ENCODE measurements at regions of chr2 and their contacts with region 1.

Region 1: DNA sequence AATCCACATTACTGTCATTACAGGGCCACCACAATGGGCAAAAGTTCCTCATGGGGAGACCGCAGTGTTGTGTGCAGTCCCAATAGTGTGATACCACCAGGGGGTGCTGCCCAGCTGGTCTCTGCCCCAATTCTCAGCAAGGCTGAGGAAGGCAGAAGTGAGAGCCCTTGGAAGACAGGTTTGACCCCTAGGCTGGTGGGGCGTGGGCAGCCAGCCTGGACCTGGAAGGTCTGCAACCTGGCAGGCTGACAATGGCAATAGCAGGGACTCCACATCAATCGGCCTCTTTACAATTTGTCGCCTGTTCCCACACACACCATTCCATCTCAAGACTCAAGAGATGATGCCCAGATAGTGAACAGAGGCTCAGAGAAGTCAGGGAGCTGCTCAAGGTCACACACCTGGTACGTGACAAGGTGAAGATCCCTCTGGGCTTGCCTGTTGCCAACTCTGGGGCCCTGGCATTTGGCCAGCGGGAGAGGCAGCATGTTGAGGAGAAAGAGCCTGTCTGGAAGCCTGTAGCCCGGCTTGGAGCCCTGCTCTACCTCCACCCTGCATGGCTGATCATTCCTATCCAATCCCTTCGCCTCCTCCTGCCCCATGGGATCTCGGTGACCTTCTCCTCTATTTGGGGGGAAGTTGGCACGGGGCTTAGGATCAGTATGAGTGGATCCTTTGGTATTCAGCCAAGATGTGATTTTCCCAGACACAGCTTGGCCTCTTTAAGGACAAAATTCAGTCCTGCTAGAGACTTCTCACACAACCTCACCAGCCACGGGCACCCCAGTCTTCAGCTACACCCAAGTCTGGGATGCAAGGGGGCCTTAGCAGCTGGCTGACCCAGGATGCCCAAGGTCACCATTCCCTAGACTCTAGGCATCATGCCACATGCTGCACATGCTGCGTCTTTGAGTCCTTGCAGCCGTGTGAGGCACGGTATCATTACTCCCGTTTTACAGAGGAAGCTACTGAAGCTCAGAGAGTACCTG is 2.9 kb upstream of the ATOH8 start:
- DNase-seq: peak in 3 of 4 donors; percentile 71 to 79 (median 73)
- ATAC-seq: peak; percentile 71
- H3K4me3 ChIP-seq: no peak overlapping the region
- H3K27ac ChIP-seq: no peak overlapping the region
- H3K4me1 ChIP-seq: peaks cover 7 to 71% of the 10 kb centered on the region in 2 donors
- H3K27me3 ChIP-seq: peaks cover 0 to 54% of the 10 kb centered on the region in 2 donors
- CTCF ChIP-seq: peak; percentile 81 to 87

Region 2: DNA sequence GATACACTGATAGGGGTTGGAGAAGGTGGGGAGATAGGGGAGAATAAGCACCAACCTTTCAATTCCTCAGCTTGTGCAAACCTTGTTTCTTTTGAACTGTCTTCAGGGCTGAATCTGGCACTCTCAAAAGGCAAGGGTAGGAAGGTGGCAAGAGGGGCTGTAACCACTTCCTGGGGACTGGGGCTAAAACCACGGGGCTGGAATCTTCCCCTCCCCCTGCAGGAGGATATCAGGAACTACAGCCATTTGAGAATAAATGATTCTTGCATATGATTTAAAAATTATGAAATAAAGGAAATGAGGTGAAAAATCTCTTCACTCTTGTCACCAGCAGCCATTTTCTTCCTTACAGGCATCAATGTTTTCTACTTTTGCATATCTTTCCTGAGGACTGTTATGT is 53.7 kb after region 1 on chr2:
- intact Hi-C with region 1: loop called in 1 of 2 experiments (anchors 10 kb)
- DNase-seq: no peak
- ATAC-seq: peak; percentile 21
- H3K4me3 ChIP-seq: no peak overlapping the region
- H3K27ac ChIP-seq: no peak overlapping the region
- H3K4me1 ChIP-seq: peaks cover 0 to 7% of the 10 kb centered on the region in 2 donors
- H3K27me3 ChIP-seq: no peaks in the 10 kb centered on the region
- CTCF ChIP-seq: peak; percentile 37 to 43

Measured in left lung (tissue), 14 donors.